Mammary epithelial cell (primary cell): ENCODE measurements at regions of chr19 and their contacts with region 1.

Region 1: GRCh38 chr19:45178262-45179071 is at the start of gene BLOC1S3:
- DNase-seq: peak; percentile 100
- H3K4me3 ChIP-seq: peak within 1 kb of the TSS; percentile 67 to 92 (median 88)
- H3K27ac ChIP-seq: peak within 1 kb of the TSS; percentile 95
- H3K4me1 ChIP-seq: peaks cover 25% of the 10 kb centered on the region
- H3K27me3 ChIP-seq: no peaks in the 10 kb centered on the region
- CTCF ChIP-seq: peak; percentile 21 to 41
- total RNA-seq, gene BLOC1S3: 7.8 to 14.4 TPM

Region 2: GRCh38 chr19:45079063-45079910 is 99.2 kb before region 1 on chr19 and contains the start of gene GEMIN7:
- CTCF ChIA-PET with region 1: no interaction called
- dilution Hi-C with region 1: no loop called
- in situ Hi-C with region 1: no loop called
- intact Hi-C with region 1: loop called (anchors 5 kb)
- DNase-seq: peak; percentile 69
- H3K4me3 ChIP-seq: peak within 1 kb of the TSS; percentile 94 to 100 (median 96)
- H3K27ac ChIP-seq: peak within 1 kb of the TSS; percentile 80
- H3K4me1 ChIP-seq: peaks cover 20% of the 10 kb centered on the region
- H3K27me3 ChIP-seq: no peaks in the 10 kb centered on the region
- CTCF ChIP-seq: no peak
- total RNA-seq, gene GEMIN7: 9.5 to 18.6 TPM

Region 3: GRCh38 chr19:45137179-45137761 is 41.2 kb before region 1 on chr19:
- CTCF ChIA-PET with region 1: no interaction called
- dilution Hi-C with region 1: loop called (anchors 5 kb)
- in situ Hi-C with region 1: no loop called
- intact Hi-C with region 1: no loop called
- DNase-seq: no peak
- H3K4me3 ChIP-seq: no peak overlapping the region
- H3K27ac ChIP-seq: no peak overlapping the region
- H3K4me1 ChIP-seq: peaks cover 19% of the 10 kb centered on the region
- H3K27me3 ChIP-seq: no peaks in the 10 kb centered on the region
- CTCF ChIP-seq: no peak

Region 4: GRCh38 chr19:45264781-45265317 is 86.4 kb after region 1 on chr19:
- CTCF ChIA-PET with region 1: no interaction called
- dilution Hi-C with region 1: loop called (anchors 5 kb)
- in situ Hi-C with region 1: no loop called
- intact Hi-C with region 1: no loop called
- DNase-seq: no peak
- H3K4me3 ChIP-seq: no peak overlapping the region
- H3K27ac ChIP-seq: no peak overlapping the region
- H3K4me1 ChIP-seq: no peaks in the 10 kb centered on the region
- H3K27me3 ChIP-seq: no peaks in the 10 kb centered on the region
- CTCF ChIP-seq: no peak

Region 5: DNA sequence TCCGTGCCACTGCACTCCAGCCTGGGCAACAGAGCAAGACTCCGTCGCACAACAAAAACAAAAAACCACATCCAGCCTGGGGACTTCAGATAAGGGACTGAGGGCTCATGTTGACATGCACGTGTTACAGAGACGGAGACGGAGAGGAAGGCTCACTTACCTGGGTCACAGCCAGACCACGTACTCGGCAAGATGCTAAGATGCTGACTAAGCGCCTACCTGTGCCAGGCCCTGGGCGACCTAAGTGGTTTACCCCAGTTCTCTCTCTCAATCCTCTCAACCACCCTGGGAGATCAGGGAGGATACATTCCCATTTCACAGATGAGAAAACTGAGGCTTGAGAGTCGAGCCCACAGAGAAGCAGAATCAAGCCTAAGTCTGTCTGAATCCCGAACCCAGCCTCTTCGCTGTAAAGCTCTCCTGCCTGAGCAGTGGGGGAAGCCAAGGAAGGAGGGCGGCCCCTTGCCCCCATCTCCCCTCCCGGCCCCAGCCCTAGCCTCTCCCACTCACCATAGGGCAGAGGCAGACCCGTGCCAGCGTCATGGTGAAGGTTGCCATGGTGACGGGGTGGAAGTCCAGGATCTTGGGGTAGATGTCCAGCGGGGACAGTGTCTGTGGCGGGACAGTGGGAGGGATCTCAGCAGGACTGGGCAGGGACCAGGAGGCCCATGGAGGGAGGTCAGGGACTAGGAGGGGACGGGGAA is 178.4 kb after region 1 on chr19:
- CTCF ChIA-PET with region 1: no interaction called
- dilution Hi-C with region 1: loop called (anchors 5 kb)
- in situ Hi-C with region 1: no loop called
- intact Hi-C with region 1: no loop called
- DNase-seq: no peak
- H3K4me3 ChIP-seq: no peak overlapping the region
- H3K27ac ChIP-seq: no peak overlapping the region
- H3K4me1 ChIP-seq: no peaks in the 10 kb centered on the region
- H3K27me3 ChIP-seq: no peaks in the 10 kb centered on the region
- CTCF ChIP-seq: no peak